ENCODE measurements at regions of chrX and their contacts with region 1.

Region 1: DNA sequence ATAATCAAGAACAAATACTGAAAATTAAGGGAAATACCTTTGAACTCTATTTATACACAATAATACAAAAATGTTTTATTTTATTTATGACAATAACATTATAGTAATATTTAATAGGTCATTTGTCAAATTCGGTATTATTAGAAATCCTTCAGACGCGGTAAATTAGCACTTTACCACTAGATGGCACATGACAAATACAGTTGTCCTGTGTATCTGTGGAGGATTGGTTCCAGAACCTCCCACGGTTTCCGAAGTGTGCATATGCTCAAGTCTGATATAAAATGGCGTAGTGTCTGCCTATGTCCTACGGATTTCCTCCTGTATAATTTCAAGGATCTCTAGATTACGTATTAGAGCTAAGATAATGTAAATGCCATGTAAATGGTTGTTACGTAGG is 8.1 kb upstream of the LINC00632 start:
- DNase-seq: no peak
- H3K4me3 ChIP-seq: no peak overlapping the region
- H3K27ac ChIP-seq: no peak overlapping the region
- H3K4me1 ChIP-seq: no peaks in the 10 kb centered on the region
- H3K27me3 ChIP-seq: no peaks in the 10 kb centered on the region
- CTCF ChIP-seq: peak in 1 of 4 experiments; percentile 23
- EP300 ChIP-seq: no peak
- POLR2A ChIP-seq: no peak

Region 2: DNA sequence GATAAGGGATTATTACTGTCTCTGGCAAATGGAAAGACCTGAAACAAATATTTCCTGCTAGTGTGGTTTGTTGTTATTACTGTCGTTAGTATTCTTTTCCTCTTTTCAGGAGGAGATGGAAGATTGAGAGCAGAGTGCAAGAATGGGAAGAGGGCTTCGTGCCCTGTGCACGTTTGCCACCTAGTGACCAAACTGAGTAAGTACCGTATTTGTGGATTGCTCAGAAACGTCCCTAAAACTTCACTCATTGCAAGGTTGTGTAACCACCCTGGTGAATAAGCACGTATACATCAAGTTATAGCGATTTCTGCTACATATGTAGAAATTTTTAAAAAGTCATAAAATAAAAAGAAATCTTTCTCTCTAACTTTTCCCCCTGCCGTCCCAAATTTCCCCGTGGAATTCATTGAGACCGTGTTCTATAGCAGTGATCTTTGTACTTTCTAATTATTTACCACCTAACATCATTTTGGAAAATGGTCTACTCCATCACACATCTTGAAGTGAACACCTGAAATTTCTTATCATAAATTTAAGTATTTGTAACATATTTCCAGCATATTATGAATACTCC is 32.4 kb after region 1 on chrX:
- intact Hi-C with region 1: loop called (anchors 5 kb)
- DNase-seq: no peak
- H3K4me3 ChIP-seq: no peak overlapping the region
- H3K27ac ChIP-seq: no peak overlapping the region
- H3K4me1 ChIP-seq: no peaks in the 10 kb centered on the region
- H3K27me3 ChIP-seq: no peaks in the 10 kb centered on the region
- CTCF ChIP-seq: peak in 3 of 4 experiments; percentile 13 to 58 (median 49)
- EP300 ChIP-seq: no peak
- POLR2A ChIP-seq: no peak